Mammary epithelial cell (primary cell): ENCODE measurements at regions of chr10 and their contacts with region 1.

Region 1: GRCh38 chr10:93080350-93081046 is 6.8 kb downstream of the CYP26A1 start:
- DNase-seq: no peak
- H3K4me3 ChIP-seq: no peak overlapping the region
- H3K27ac ChIP-seq: no peak overlapping the region
- H3K4me1 ChIP-seq: no peaks in the 10 kb centered on the region
- H3K27me3 ChIP-seq: peaks cover 2% of the 10 kb centered on the region
- CTCF ChIP-seq: peak; percentile 67 to 92

Region 2: DNA sequence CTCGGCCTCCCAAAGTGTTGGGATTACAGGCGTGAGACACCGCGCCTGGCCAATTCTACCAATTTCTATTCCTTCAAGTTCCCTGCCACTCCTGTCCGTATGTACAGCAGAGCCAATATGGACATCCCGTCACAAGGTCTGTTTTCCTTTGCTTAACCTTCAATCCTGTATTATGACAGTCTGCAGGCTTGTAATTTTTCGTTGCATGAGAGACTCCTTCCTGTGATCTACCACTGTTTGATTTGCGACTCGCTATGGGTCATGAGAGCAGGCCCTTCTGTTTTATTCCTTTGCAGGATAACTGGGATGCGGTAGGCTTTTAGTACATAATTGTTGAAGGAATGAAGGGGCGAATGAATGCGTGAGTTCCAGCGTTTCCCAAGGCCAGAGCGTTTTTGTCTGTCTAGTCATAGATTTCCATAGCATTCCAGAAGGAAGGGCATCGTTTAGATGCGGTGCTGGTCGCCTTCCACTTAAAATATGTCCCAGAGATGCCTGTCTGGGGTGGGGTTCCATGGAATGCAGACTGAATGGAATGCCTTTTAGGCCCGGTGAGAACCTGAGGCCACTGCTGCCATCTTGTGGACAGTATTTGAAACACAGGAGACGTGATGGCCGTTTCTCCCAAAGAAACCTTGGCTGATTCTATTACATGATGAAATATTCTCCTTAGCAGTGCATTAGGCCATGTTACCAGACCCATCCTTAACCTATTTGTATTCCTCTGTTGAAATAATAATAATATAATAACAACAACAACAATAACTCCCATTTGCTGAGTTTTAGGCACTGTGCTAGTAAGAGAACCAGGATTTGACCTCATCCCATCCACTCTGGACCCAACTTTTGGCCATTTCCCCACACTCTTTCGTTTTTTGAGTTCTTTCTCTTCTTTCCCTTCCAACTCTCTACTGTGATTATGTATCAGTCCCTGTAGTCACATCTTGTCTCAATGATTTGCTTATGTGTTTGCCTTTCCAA is 208.4 kb after region 1 on chr10:
- CTCF ChIA-PET with region 1: no interaction called
- dilution Hi-C with region 1: no loop called
- in situ Hi-C with region 1: loop called in 1 of 2 experiments (anchors 5 kb)
- intact Hi-C with region 1: loop called (anchors 1 kb)
- DNase-seq: peak; percentile 70
- H3K4me3 ChIP-seq: no peak overlapping the region
- H3K27ac ChIP-seq: no peak overlapping the region
- H3K4me1 ChIP-seq: peaks cover 13% of the 10 kb centered on the region
- H3K27me3 ChIP-seq: no peaks in the 10 kb centered on the region
- CTCF ChIP-seq: peak; percentile 69 to 80

Region 3: GRCh38 chr10:93352638-93353383 is 272.3 kb after region 1 on chr10:
- CTCF ChIA-PET with region 1: no interaction called
- dilution Hi-C with region 1: no loop called
- in situ Hi-C with region 1: no loop called
- intact Hi-C with region 1: loop called (anchors 1 kb)
- DNase-seq: no peak
- H3K4me3 ChIP-seq: no peak overlapping the region
- H3K27ac ChIP-seq: no peak overlapping the region
- H3K4me1 ChIP-seq: no peaks in the 10 kb centered on the region
- H3K27me3 ChIP-seq: no peaks in the 10 kb centered on the region
- CTCF ChIP-seq: peak; percentile 43 to 48

Region 4: GRCh38 chr10:93503075-93503474 is 422.6 kb after region 1 on chr10:
- CTCF ChIA-PET with region 1: no interaction called
- dilution Hi-C with region 1: no loop called
- in situ Hi-C with region 1: loop called (anchors 25 kb)
- intact Hi-C with region 1: no loop called
- DNase-seq: no peak
- H3K4me3 ChIP-seq: no peak overlapping the region
- H3K27ac ChIP-seq: no peak overlapping the region
- H3K4me1 ChIP-seq: peaks cover 4% of the 10 kb centered on the region
- H3K27me3 ChIP-seq: no peaks in the 10 kb centered on the region
- CTCF ChIP-seq: no peak